ENCODE measurements at regions of chr7 and their contacts with region 1.

Region 1: GRCh38 chr7:123410273-123410904 is 124.0 kb downstream of the IQUB start:
- DNase-seq: peak; percentile 82
- H3K4me3 ChIP-seq: no peak overlapping the region
- CTCF ChIP-seq: no peak

Region 2: GRCh38 chr7:123305840-123306375 is 104.5 kb before region 1 on chr7:
- in situ Hi-C with region 1: no loop called
- DNase-seq: no peak
- H3K4me3 ChIP-seq: no peak overlapping the region
- CTCF ChIP-seq: no peak

Region 3: GRCh38 chr7:123455965-123456470 is 45.6 kb after region 1 on chr7:
- in situ Hi-C with region 1: loop called (anchors 5 kb)
- DNase-seq: no peak
- H3K4me3 ChIP-seq: no peak overlapping the region
- CTCF ChIP-seq: no peak

Region 4: GRCh38 chr7:123849855-123850254 is 439.5 kb after region 1 on chr7:
- in situ Hi-C with region 1: no loop called
- DNase-seq: no peak
- H3K4me3 ChIP-seq: no peak overlapping the region
- CTCF ChIP-seq: no peak